ENCODE measurements at regions of chr2 and their contacts with region 1.

Region 1: GRCh38 chr2:239252801-239253200 is 148.0 kb downstream of the HDAC4 start:
- DNase-seq: peak; percentile 85 to 89
- ATAC-seq: peak; percentile 77
- H3K4me3 ChIP-seq: no peak overlapping the region
- H3K27ac ChIP-seq: no peak overlapping the region
- H3K4me1 ChIP-seq: no peaks in the 10 kb centered on the region
- H3K27me3 ChIP-seq: no peaks in the 10 kb centered on the region

Region 2: DNA sequence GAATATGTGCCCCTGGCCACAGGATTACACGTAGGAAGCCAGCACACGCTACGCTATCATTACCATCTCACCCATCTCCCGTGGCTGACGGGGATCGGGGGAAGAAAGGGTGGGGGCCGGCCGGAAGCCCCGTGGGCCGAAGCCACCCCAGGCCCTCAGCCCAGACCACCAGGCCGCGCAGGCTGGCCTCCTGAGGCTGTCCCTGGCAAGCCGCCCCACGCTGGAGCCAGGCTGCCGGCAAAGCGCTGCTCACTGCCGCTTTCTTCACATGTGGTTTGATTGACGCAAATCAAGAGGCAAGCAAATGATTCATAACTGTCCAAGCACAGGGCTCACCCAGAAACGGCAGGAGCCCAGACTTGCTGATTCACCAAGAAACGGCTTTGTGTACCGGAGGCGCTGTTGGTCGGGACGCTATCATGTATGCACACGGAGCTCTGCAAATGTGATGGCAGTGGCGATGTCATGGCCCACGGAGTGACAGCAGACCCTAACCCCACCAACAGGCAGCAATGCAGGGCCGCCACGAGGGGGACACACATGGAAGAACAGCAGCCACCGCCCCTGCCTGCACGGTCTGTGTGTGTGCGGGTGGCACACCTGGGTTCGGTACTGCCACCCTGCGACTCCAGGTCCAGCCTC is 22.4 kb after region 1 on chr2:
- intact Hi-C with region 1: loop called in 1 of 2 experiments (anchors 2 kb)
- DNase-seq: peak; percentile 90 to 93
- ATAC-seq: peak; percentile 81
- H3K4me3 ChIP-seq: no peak overlapping the region
- H3K27ac ChIP-seq: no peak overlapping the region
- H3K4me1 ChIP-seq: no peaks in the 10 kb centered on the region
- H3K27me3 ChIP-seq: no peaks in the 10 kb centered on the region

Region 3: GRCh38 chr2:239502430-239503186 is 249.8 kb after region 1 on chr2:
- intact Hi-C with region 1: no loop called
- DNase-seq: no peak
- ATAC-seq: no peak
- H3K4me3 ChIP-seq: no peak overlapping the region
- H3K27ac ChIP-seq: no peak overlapping the region
- H3K4me1 ChIP-seq: no peaks in the 10 kb centered on the region
- H3K27me3 ChIP-seq: no peaks in the 10 kb centered on the region

Measured in aorta (tissue), 5 donors.